Ovary (tissue), 10 donors: ENCODE measurements at regions of chr16 and their contacts with region 1.

Region 1: DNA sequence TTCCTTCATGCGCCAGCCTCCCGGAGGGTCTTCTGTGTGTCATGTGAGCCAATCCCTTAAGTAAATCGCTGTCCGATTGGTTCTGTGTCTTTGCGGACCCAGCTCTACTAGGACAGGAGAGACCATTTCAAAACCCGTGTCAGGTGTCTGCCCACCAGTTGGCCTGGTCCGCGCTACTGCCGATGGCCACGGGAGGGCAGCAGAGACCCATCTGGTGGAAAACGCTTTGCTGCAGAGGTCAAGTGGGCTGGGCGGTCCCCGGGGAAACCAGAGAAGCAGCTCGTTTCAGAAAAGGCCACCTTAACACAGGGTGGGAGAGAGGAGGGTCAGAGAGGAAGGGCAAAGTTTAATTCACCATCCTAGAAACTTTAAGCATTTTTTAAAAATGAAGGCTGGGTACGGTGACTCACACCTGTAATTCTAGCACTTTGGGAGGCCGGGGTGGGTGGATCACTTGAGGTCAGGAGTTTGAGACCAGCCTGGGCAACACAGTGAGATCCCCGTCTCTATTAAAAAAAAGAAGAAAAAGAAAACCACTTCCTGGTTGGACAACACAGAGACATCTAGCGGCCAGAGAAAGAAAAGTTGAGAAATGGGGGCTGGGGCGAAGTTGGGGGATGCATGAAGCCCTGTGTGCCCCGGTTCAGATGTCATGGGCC is 2.8 kb upstream of the CIBAR2 start:
- DNase-seq: peak; percentile 84 to 94 (median 91)
- H3K4me3 ChIP-seq: no peak overlapping the region
- H3K27ac ChIP-seq: no peak overlapping the region
- H3K4me1 ChIP-seq: peaks cover 1% of the 10 kb centered on the region
- H3K27me3 ChIP-seq: no peaks in the 10 kb centered on the region
- CTCF ChIP-seq: peak; percentile 91 to 98 (median 95)
- EP300 ChIP-seq: no peak
- POLR2A ChIP-seq: no peak

Region 2: DNA sequence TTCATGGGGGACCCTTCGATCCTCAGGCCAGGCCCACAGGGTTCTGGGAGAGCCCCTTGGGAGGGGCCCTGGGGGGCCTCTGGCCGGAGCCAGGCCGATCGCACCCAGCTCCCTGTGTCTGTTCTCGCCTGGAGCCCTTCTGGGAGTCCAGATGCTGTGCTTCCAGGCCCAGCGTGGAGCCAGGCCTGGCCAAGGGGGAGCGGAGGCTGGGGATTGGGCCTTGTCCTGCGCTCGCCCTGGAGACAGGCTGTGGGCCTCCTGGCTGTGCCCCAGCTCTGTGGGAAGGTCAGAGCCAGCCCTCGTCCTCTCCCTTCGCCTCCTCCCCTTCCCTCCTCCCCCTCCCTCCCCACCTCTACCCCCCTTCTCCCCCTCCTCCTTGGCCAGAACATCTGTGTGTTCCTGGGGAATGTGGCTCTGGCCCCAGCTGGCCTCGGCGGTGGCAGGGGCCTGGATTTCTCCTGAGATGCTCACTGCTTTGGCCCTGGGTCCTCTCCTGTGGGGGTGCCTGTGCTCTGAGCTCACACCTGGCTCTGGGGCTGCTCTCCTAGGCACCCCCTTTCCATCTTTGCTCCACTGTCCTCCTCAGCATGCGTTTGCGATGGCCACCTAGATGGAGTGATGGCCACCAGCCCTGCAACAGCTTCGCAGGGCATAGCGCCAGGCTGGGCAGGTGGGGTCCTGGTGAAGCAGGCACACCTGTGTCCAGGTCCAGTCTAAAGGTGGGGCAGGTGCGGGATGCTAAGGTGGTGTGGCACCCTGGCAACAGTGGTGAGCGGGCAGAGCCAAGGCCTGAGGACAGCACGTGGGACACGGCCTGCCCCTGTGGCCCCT is 87.8 kb after region 1 on chr16:
- intact Hi-C with region 1: no loop called
- DNase-seq: peak; percentile 93 to 96 (median 95)
- H3K4me3 ChIP-seq: no peak overlapping the region
- H3K27ac ChIP-seq: peak overlapping the region; percentile 65 to 74
- H3K4me1 ChIP-seq: peaks cover 65% of the 10 kb centered on the region
- H3K27me3 ChIP-seq: no peaks in the 10 kb centered on the region
- CTCF ChIP-seq: no peak
- EP300 ChIP-seq: no peak
- POLR2A ChIP-seq: peak; percentile 52

Region 3: DNA sequence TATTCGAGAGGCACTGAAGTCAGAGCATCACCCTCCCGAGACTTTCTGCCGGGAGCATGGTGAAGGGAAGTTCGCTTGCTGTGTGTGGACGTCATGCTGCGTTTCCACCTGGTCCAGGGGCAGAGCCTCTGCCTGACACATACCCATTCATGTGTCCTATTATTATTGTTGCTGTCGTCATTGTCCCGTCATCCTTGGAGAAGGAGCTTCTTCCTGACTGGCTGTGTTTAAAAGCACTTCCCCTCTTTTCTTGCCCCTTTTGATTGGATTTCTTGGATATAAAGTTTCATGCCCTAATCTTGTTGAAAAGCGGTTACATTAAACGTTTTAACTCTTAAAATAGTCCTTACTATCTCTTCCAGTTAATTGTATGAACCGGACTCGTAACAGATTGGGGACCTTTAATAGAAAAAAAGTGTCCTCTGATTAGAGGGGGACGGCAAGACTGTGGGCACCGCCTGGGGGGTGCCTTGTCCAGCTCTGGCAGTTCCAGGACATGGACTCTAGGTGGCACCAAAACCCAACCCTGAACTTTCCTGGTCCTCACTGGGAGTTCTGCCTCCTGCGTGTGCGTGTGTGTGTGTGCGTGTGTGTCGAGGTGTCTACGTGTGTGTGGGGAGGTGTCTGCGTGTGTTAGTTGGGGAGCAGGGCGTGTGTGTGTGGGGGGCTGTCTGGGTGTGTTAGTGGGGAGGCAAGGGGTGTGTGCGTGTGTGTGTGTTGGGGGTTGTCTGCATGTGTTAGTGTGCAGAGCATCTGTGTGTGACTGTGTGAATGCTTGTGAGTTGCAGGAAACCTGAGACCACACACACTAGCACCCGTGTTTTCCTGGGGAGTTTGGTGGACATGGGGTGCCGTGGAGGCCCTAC is 130.5 kb after region 1 on chr16:
- intact Hi-C with region 1: loop called in 2 of 4 experiments (anchors 5 to 10 kb)
- DNase-seq: peak; percentile 72 to 84 (median 80)
- H3K4me3 ChIP-seq: no peak overlapping the region
- H3K27ac ChIP-seq: peak overlapping the region in 1 of 2 donors; percentile 40
- H3K4me1 ChIP-seq: peaks cover 10% of the 10 kb centered on the region
- H3K27me3 ChIP-seq: no peaks in the 10 kb centered on the region
- CTCF ChIP-seq: peak; percentile 49 to 85 (median 82)
- EP300 ChIP-seq: no peak
- POLR2A ChIP-seq: no peak

Region 4: GRCh38 chr16:85253084-85253941 is 138.3 kb after region 1 on chr16:
- intact Hi-C with region 1: loop called in 2 of 4 experiments (anchors 5 to 10 kb)
- DNase-seq: peak in 4 of 5 donors; percentile 67 to 71 (median 70)
- H3K4me3 ChIP-seq: no peak overlapping the region
- H3K27ac ChIP-seq: no peak overlapping the region
- H3K4me1 ChIP-seq: no peaks in the 10 kb centered on the region
- H3K27me3 ChIP-seq: no peaks in the 10 kb centered on the region
- CTCF ChIP-seq: peak; percentile 37 to 77 (median 56)
- EP300 ChIP-seq: no peak
- POLR2A ChIP-seq: no peak

Region 5: GRCh38 chr16:85258629-85259028 is 143.6 kb after region 1 on chr16:
- intact Hi-C with region 1: loop called in 2 of 4 experiments (anchors 5 to 10 kb)
- DNase-seq: no peak
- H3K4me3 ChIP-seq: no peak overlapping the region
- H3K27ac ChIP-seq: no peak overlapping the region
- H3K4me1 ChIP-seq: no peaks in the 10 kb centered on the region
- H3K27me3 ChIP-seq: no peaks in the 10 kb centered on the region
- CTCF ChIP-seq: no peak
- EP300 ChIP-seq: no peak
- POLR2A ChIP-seq: no peak